Caco-2 (cell line): ENCODE measurements at regions of chr5 and their contacts with region 1.

Region 1: DNA sequence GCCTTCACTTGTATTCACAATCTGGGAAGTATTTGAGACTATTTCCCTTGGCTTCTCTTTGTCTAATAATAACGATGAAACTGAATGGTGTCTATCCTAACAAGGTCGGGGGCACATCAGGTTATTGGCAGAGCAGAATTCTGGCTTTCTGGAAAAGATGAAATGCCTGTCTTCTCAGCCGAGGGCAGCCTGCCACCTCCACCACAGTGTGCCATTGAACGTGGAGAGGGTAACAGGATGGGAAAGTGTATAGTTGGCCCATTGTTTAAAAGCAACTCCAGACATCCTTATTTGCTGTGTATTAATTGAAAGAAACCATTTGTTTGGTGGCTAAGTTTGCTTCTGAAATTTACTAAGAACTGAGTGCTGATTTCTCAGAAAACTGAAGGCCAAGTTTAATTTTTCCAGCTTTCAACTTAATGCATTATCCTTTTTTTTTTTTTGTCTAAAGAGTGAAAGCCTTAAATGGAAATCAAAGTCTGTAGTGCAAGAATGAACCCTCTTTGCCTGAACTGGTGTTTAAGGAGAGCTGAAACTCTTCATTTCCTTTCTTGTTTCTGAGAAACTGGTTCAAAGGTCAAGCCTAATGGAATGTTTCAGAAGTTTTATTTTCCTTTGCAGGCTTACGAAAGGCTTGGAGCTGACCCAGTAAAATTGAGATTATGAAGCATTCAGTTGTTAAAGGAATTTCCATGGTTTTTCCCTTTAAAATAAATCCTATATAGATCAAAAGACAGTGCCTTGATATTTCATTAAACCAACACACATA is 563.7 kb upstream of the DAP start:
- DNase-seq: peak in 1 of 2 experiments; percentile 49
- H3K4me3 ChIP-seq: no peak overlapping the region
- H3K4me3 Mint-ChIP-seq: peak overlapping the region; percentile 33
- H3K27ac Mint-ChIP-seq: peak overlapping the region; percentile 45
- H3K4me1 ChIP-seq: peaks cover 21% of the 10 kb centered on the region
- H3K4me1 Mint-ChIP-seq: peaks cover 16% of the 10 kb centered on the region
- H3K27me3 ChIP-seq: no peaks in the 10 kb centered on the region
- H3K27me3 Mint-ChIP-seq: no peaks in the 10 kb centered on the region
- CTCF ChIP-seq: no peak

Region 2: DNA sequence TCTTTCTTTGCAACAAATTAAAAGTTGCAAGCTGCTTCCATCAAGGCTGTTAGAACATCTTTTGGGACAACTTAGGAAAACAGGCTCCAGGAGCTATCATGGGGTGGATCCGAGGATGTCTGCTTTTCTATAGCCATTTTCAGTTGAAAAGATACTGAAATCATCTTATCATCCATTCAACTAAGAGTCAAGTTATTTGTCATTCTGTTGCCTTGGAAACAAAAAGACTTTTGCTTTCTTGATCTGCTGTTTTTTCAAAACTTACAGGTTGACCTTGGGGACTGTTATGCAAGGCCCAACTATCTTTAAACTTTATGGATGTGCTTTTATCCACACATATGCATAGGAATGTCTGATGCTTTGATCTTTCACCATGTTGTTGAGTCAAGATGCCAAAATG is 18.3 kb before region 1 on chr5:
- CTCF ChIA-PET with region 1: no interaction called
- POLR2A ChIA-PET with region 1: no interaction called
- intact Hi-C with region 1: loop called (anchors 1 kb)
- DNase-seq: peak in 1 of 2 experiments; percentile 44
- H3K4me3 ChIP-seq: no peak overlapping the region
- H3K4me3 Mint-ChIP-seq: no peak overlapping the region
- H3K27ac Mint-ChIP-seq: no peak overlapping the region
- H3K4me1 ChIP-seq: peaks cover 4% of the 10 kb centered on the region
- H3K4me1 Mint-ChIP-seq: peaks cover 10% of the 10 kb centered on the region
- H3K27me3 ChIP-seq: no peaks in the 10 kb centered on the region
- H3K27me3 Mint-ChIP-seq: no peaks in the 10 kb centered on the region
- CTCF ChIP-seq: no peak

Region 3: GRCh38 chr5:11371021-11371420 is 46.3 kb after region 1 on chr5:
- CTCF ChIA-PET with region 1: no interaction called
- POLR2A ChIA-PET with region 1: no interaction called
- intact Hi-C with region 1: loop called (anchors 1 kb)
- DNase-seq: peak; percentile 71 to 81
- H3K4me3 ChIP-seq: no peak overlapping the region
- H3K4me3 Mint-ChIP-seq: no peak overlapping the region
- H3K27ac Mint-ChIP-seq: peak overlapping the region; percentile 1
- H3K4me1 ChIP-seq: peaks cover 46% of the 10 kb centered on the region
- H3K4me1 Mint-ChIP-seq: no peaks in the 10 kb centered on the region
- H3K27me3 ChIP-seq: no peaks in the 10 kb centered on the region
- H3K27me3 Mint-ChIP-seq: no peaks in the 10 kb centered on the region
- CTCF ChIP-seq: no peak